ENCODE measurements at regions of chr6 and their contacts with region 1.

Region 1: DNA sequence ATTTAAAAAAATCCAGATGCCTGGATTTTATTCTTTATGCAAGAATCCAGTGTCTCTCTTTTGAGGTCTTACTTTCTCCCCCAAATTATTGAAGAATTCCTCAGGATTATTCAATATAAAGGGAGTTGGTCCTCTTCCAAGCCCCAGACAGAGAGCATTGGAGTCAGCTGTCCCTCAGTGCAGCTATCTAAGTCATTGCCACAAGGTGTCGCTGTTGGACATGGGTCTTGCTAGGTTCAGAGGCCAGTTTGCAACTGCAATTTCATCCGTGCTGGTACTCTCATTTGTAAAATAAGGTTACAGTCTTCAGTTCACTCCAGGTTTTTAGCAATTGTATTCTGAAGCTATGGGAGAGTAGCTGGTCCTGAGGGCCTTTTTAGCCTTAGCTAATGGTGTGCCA is 27.8 kb downstream of the CCN2 start:
- DNase-seq: no peak
- ATAC-seq: peak; percentile 85
- H3K4me3 ChIP-seq: no peak overlapping the region
- H3K27ac ChIP-seq: no peak overlapping the region
- H3K4me1 ChIP-seq: no peaks in the 10 kb centered on the region
- H3K27me3 ChIP-seq: no peaks in the 10 kb centered on the region
- CTCF ChIP-seq: peak; percentile 53 to 72 (median 71)
- EP300 ChIP-seq: no peak
- POLR2A ChIP-seq: no peak
- RAD21 ChIP-seq: peak; percentile 53

Region 2: GRCh38 chr6:132218059-132218696 is 294.8 kb after region 1 on chr6:
- CTCF ChIA-PET with region 1: interaction called, 36 read pairs
- POLR2A ChIA-PET with region 1: no interaction called
- RAD21 ChIA-PET with region 1: interaction called, 5 read pairs
- SMC1A ChIA-PET with region 1: interaction called, 7 read pairs
- in situ Hi-C with region 1: loop called (anchors 5 kb)
- intact Hi-C with region 1: loop called (anchors 2 kb)
- DNase-seq: no peak
- ATAC-seq: peak; percentile 46; the same call in 1 of the 3 replicates
- H3K4me3 ChIP-seq: no peak overlapping the region
- H3K27ac ChIP-seq: no peak overlapping the region
- H3K4me1 ChIP-seq: no peaks in the 10 kb centered on the region
- H3K27me3 ChIP-seq: no peaks in the 10 kb centered on the region
- CTCF ChIP-seq: peak; percentile 12 to 33 (median 20); a peak in 4 of 6 replicates
- EP300 ChIP-seq: no peak
- POLR2A ChIP-seq: no peak
- RAD21 ChIP-seq: peak; percentile 52